ENCODE measurements at regions of chr15 and their contacts with region 1.

Region 1: DNA sequence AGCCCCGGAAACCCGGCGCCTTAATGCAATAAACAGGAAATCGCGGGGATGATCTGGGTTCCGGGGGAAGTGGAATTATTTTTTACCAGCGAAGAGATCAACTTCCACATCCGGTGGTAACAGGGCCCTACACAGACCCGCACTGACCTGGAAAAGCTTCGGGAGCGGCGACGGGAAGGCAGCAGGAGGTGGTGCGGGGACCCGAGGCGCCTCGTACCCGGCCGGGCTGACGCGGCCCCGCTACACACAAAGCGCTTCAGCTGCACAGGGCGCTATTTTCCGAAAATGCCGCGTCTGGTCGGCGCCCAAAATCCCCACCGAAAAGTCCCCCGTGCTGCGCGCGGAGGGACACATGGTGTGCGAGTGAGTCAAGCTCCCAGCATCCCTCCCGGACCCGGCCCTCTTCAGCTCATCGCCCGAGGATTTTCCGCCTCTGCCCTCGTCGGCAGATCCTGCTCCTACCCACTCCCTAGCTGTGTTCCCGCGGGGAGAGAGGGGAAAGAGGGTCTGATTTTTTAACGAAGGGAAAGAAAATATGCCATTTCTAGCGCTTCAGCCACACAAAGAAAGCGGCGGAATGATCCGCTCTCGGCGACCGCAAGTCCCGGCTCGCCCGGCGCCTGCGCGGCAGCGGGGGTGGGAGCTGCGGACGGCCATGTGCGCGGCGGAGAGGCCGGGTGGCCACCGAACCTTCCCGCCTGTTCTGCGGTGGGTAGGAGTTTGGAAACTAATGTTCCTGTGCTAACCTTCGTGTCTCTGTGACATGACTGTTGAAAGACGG is at the start of gene GABPB1:
- DNase-seq: peak; percentile 90
- H3K4me3 Mint-ChIP-seq: peak within 1 kb of the TSS; percentile 98
- H3K27ac Mint-ChIP-seq: peak within 1 kb of the TSS; percentile 100
- H3K4me1 Mint-ChIP-seq: peaks cover 50% of the 10 kb centered on the region
- H3K27me3 Mint-ChIP-seq: no peaks in the 10 kb centered on the region
- total RNA-seq, gene GABPB1: 48.2 to 53.5 TPM

Region 2: GRCh38 chr15:49046220-49047102 is 1308.6 kb before region 1 on chr15 and contains the start of gene SECISBP2L:
- CTCF ChIA-PET with region 1: no interaction called
- intact Hi-C with region 1: loop called (anchors 2 kb)
- DNase-seq: peak; percentile 95
- H3K4me3 Mint-ChIP-seq: peak within 1 kb of the TSS; percentile 91
- H3K27ac Mint-ChIP-seq: peak within 1 kb of the TSS; percentile 81
- H3K4me1 Mint-ChIP-seq: peaks cover 19% of the 10 kb centered on the region
- H3K27me3 Mint-ChIP-seq: no peaks in the 10 kb centered on the region
- total RNA-seq, gene SECISBP2L: 17.4 to 18.6 TPM

Region 3: DNA sequence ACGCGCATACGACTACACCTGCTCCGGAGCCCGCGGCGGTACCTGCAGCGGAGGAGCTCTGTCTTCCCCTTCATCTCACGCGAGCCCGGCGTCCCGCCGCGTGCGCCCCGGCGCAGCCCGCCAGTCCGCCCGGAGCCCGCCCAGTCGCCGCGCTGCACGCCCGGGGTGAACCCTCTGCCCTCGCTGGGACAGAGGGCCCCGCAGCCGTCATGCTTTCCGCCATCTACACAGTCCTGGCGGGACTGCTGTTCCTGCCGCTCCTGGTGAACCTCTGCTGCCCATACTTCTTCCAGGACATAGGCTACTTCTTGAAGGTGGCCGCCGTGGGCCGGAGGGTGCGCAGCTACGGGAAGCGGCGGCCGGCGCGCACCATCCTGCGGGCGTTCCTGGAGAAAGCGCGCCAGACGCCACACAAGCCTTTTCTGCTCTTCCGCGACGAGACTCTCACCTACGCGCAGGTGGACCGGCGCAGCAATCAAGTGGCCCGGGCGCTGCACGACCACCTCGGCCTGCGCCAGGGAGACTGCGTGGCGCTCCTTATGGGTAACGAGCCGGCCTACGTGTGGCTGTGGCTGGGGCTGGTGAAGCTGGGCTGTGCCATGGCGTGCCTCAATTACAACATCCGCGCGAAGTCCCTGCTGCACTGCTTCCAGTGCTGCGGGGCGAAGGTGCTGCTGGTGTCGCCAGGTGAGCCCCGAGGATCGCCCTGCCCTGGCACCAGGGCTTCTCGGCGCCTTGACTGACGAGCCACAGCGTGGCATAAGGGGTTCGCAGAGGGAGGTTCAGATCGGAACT is 172.6 kb before region 1 on chr15:
- CTCF ChIA-PET with region 1: interaction called, 3 read pairs
- intact Hi-C with region 1: loop called (anchors 1 kb)
- DNase-seq: peak; percentile 73
- H3K4me3 Mint-ChIP-seq: peak overlapping the region; percentile 98
- H3K27ac Mint-ChIP-seq: peak overlapping the region; percentile 87
- H3K4me1 Mint-ChIP-seq: peaks cover 29% of the 10 kb centered on the region
- H3K27me3 Mint-ChIP-seq: peaks cover 25% of the 10 kb centered on the region

Region 4: GRCh38 chr15:50278496-50278895 is 76.5 kb before region 1 on chr15:
- CTCF ChIA-PET with region 1: no interaction called
- intact Hi-C with region 1: loop called (anchors 5 kb)
- DNase-seq: no peak
- H3K4me3 Mint-ChIP-seq: no peak overlapping the region
- H3K27ac Mint-ChIP-seq: peak overlapping the region; percentile 78
- H3K4me1 Mint-ChIP-seq: peaks cover 42% of the 10 kb centered on the region
- H3K27me3 Mint-ChIP-seq: no peaks in the 10 kb centered on the region

Region 5: DNA sequence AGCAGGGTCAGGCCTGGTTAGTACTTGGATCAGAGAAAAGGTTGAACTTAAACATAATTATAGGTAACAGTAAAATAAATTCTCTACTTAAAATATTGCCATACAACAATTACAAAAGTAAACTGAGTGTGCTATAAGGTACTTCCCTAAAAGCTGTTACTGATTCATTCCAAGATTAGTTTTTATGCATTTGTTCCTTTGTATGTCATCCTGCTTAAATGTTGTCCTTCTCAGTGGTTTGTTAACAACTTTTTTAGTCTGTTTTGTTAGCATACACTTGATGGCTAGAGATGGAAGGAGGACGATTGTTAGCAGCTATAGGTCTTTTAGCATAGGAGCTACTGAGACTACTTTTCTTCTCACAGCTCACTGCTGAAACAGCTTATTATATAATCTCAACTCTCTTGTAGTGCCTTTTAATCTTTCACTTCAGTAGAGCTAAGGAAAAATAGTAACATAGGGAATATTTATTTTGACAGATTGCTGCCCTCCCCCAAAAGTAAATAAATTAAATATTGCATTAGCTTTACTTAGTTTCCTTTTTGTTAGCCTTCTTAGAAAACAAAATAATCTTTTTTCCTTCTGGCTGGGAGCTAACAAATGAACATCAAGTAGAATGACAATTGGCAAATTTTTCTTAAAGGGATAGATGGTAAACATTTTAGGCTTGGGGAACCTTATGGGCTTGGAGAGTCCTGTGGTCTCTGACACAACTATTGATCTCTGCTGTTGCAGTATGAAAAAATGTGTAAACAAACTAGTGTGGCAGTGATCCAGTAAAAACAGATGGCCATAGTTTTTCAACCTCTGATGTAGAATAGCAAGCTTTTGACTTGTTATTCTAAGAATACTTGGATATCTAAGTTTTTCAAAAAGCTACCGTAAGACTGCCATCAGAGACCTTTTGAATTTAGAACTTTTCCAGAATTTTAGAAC is 108.7 kb after region 1 on chr15:
- CTCF ChIA-PET with region 1: no interaction called
- intact Hi-C with region 1: no loop called
- DNase-seq: no peak
- H3K4me3 Mint-ChIP-seq: no peak overlapping the region
- H3K27ac Mint-ChIP-seq: no peak overlapping the region
- H3K4me1 Mint-ChIP-seq: peaks cover 15% of the 10 kb centered on the region
- H3K27me3 Mint-ChIP-seq: no peaks in the 10 kb centered on the region

Region 6: DNA sequence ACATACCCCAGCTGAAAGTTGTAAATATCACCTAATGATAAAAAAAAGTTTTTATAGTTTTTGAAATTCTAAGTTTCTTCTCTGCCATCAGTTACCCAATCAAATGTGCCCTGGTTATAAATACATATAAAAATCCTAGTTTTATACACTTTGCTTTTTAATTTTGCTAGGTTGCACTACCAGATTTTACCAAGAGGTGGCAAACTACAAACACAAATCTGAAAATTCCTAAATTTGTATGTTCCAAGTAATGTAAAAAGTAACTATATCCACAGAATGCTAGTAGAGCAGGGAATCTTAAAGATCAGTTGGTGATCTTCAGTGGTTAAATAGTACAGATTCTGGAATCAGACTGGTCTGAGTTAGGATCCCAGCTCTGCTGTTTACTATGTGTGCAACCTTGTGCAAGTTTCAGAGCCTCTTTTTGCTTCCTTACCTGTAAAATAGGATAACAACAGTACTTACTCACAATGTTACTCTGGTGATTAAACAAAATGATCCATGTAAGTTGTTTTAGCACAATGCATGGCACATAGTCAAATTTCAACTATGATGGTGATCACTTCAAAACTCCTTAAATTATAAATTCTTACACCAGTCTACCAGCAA is 320.6 kb after region 1 on chr15:
- CTCF ChIA-PET with region 1: no interaction called
- intact Hi-C with region 1: loop called (anchors 2 kb)
- DNase-seq: no peak
- H3K4me3 Mint-ChIP-seq: no peak overlapping the region
- H3K27ac Mint-ChIP-seq: no peak overlapping the region
- H3K4me1 Mint-ChIP-seq: peaks cover 31% of the 10 kb centered on the region
- H3K27me3 Mint-ChIP-seq: no peaks in the 10 kb centered on the region

Region 7: GRCh38 chr15:50876989-50877360 is 521.9 kb after region 1 on chr15:
- CTCF ChIA-PET with region 1: no interaction called
- intact Hi-C with region 1: loop called (anchors 1 kb)
- DNase-seq: peak; percentile 85
- H3K4me3 Mint-ChIP-seq: peak overlapping the region; percentile 75
- H3K27ac Mint-ChIP-seq: peak overlapping the region; percentile 46
- H3K4me1 Mint-ChIP-seq: peaks cover 53% of the 10 kb centered on the region
- H3K27me3 Mint-ChIP-seq: peaks cover 4% of the 10 kb centered on the region

Measured in activated naive CD4-positive, alpha-beta T cell treated with anti-CD3 and anti-CD28 coated beads for 36 hours (primary cell).